Left cardiac atrium (tissue), 4 donors: ENCODE measurements at regions of chr2 and their contacts with region 1.

Region 1: DNA sequence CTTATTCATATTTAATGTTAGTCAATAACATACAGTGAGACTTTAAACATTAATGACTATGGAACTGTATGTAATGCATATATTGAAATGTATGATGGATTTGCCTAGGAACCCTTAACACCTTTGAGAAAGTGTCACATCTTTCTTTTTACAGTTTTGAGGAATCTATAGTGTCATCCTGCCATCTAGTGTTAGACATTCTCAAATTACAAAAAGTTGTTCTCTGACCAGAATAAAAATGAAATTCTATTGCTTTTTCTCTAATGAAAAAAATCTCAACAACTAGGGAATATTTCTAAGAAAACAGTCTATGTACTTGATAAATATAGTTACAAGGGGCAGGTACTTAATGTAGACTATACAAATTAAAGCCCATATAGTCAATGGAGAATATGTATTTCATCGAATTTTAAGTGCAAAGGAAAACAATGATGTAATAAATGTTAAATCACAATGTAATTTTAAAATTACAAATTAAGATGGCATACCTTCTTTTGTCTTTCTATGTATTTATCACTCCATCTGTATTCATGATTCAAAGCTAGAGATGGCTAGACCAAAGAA is 5.1 kb upstream of the CALCRL start:
- DNase-seq: no peak
- ATAC-seq: no peak

Region 2: GRCh38 chr2:186862869-186863709 is 590.1 kb before region 1 on chr2:
- intact Hi-C with region 1: loop called (anchors 1 to 5 kb)
- DNase-seq: no peak
- ATAC-seq: peak in 1 of 2 donors; percentile 44

Region 3: GRCh38 chr2:187299122-187299906 is 153.8 kb before region 1 on chr2:
- intact Hi-C with region 1: loop called in 1 of 2 experiments (anchors 5 kb)
- DNase-seq: no peak
- ATAC-seq: no peak